ENCODE measurements at regions of chr15 and their contacts with region 1.

Region 1: DNA sequence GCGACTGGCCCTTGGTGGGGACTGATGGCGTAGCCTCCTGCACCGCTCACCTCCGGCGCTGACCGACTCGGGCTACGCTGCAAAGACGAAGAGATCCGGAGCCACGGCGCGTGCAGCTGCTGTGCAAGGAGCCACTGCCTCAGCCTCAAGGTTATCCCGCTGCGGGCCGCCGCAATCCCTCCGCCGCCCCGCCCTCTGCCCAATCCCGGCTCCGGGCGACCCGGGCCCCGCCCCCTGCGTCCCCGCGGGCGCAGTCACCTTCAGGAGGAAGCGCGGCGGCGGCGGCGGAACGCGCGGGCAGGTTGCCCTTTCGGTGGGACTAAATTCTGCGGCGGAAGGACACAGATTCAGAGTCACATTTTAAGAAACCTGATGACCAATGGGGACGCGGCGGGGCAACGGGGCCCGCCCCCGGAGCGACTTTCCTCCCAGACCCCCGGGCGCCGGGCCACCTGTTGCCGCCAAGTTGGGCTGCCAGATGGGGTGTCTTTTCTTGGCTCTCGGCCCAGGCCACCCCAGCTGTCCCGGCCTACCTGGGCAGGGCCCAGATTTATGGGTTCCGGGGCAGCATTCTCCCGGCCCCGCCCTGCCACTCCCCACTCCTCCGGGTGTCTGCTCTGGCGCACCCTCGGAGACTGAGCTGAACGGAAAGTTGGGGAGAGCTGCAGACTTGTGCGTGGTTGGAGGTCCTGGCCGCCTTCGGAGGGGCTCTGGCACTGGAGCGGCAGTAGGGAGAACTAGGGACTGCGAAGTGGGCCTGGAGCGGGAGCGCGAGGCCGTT is at the start of gene PKM:
- DNase-seq: peak; percentile 95 to 97
- ATAC-seq: peak; percentile 88 to 94 (median 91)
- H3K4me3 ChIP-seq: peak within 1 kb of the TSS; percentile 48 to 99 (median 86)
- H3K27ac ChIP-seq: peak within 1 kb of the TSS; percentile 92 to 100 (median 98)
- H3K4me1 ChIP-seq: peaks cover 20 to 53% (median 48%) of the 10 kb centered on the region in 9 donors
- H3K27me3 ChIP-seq: no peaks in the 10 kb centered on the region
- CTCF ChIP-seq: peak in 1 of 9 donors; percentile 5
- total RNA-seq, gene PKM: 851 to 1,508 (median 1,153) TPM

Region 2: DNA sequence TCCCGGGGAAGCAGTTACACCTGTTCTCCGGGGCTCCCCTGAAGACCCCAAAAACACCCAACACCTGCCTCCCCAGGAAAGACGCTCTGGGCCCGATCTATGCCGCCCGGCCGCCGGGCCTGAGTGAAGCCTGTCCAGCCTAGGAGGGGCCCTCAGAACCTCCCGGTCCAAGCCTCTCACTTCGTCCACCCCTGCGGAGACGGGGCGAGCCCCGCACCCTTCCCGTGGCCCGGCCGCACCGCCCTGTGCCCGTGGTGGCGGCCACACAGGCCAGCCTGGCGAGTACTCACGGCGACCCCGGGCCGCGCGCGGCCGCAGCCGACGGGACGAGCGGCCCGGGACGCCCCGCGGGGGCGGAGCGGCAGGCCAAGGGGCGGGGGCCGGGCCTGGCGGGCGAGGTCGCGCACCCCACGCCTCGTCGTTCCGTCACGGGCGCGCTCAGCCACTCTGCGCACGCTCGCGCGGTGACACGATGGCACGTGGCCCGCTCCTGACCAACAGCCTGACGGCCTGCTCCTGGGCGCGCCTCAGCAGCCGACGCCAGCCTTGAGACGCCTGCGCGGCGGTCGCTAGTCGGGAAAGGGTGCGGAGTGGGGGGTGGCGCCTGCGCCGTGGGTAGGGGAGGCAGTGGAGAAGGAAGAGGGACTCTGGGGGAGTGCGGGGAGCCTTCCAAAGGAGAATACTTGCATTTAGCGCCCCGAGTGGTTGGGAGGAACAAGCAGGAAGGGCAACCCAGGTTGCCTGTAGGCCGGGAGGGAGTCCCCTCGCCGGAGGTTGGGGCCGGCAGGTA is 41.2 kb after region 1 on chr15 and contains the start of gene PARP6:
- intact Hi-C with region 1: loop called in 5 of 10 experiments (anchors 1 to 5 kb)
- DNase-seq: peak; percentile 98 to 99
- ATAC-seq: peak; percentile 99 to 100 (median 100)
- H3K4me3 ChIP-seq: peak within 1 kb of the TSS; percentile 77 to 95 (median 90)
- H3K27ac ChIP-seq: peak within 1 kb of the TSS; percentile 37 to 98 (median 94)
- H3K4me1 ChIP-seq: peaks cover 0 to 32% (median 26%) of the 10 kb centered on the region in 9 donors
- H3K27me3 ChIP-seq: no peaks in the 10 kb centered on the region
- CTCF ChIP-seq: peak; percentile 34 to 88 (median 72)
- total RNA-seq, gene PARP6: 28.2 to 53.5 (median 37.6) TPM